ENCODE measurements at regions of chr2 and their contacts with region 1.

Region 1: GRCh38 chr2:233976690-233977294 is 59.6 kb downstream of the TRPM8 start:
- DNase-seq: peak in 1 of 2 donors; percentile 82
- ATAC-seq: peak; percentile 73 to 88 (median 84)
- H3K4me3 ChIP-seq: no peak overlapping the region
- H3K4me3 Mint-ChIP-seq: no peak overlapping the region
- H3K27ac ChIP-seq: no peak overlapping the region
- H3K27ac Mint-ChIP-seq: peak overlapping the region; percentile 36 to 67
- H3K4me1 ChIP-seq: peaks cover 21% of the 10 kb centered on the region
- H3K4me1 Mint-ChIP-seq: peaks cover 26 to 31% of the 10 kb centered on the region in 2 donors
- H3K27me3 ChIP-seq: no peaks in the 10 kb centered on the region
- H3K27me3 Mint-ChIP-seq: peaks cover 0 to 9% of the 10 kb centered on the region in 2 donors
- CTCF ChIP-seq: peak; percentile 73

Region 2: GRCh38 chr2:233387667-233388528 is 588.9 kb before region 1 on chr2:
- intact Hi-C with region 1: no loop called
- DNase-seq: peak in 1 of 2 donors; percentile 48
- ATAC-seq: no peak
- H3K4me3 ChIP-seq: no peak overlapping the region
- H3K4me3 Mint-ChIP-seq: peak overlapping the region; percentile 87
- H3K27ac ChIP-seq: peak overlapping the region; percentile 64
- H3K27ac Mint-ChIP-seq: peak overlapping the region; percentile 91 to 93
- H3K4me1 ChIP-seq: peaks cover 66% of the 10 kb centered on the region
- H3K4me1 Mint-ChIP-seq: peaks cover 67 to 78% of the 10 kb centered on the region in 2 donors
- H3K27me3 ChIP-seq: no peaks in the 10 kb centered on the region
- H3K27me3 Mint-ChIP-seq: no peaks in the 10 kb centered on the region
- CTCF ChIP-seq: no peak

Region 3: DNA sequence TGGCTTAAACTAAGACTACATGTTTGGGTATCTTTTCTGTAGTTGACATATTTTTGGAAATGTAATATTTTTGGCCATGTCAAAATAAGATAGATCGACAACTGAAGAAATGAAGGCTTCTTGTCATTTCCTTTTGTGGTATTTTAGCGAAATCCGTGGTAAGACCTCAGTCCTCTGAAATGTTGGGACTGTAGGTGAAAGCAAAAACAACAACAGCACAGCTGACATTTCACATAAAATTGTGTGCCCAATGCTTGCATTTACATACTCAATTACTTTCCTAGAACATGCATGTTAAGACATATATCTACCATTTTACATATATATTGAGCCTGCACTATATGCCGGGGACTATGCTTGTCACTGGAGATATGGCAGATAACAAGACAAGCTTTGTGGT is 123.9 kb after region 1 on chr2:
- intact Hi-C with region 1: loop called (anchors 2 kb)
- DNase-seq: peak in 1 of 2 donors; percentile 63
- ATAC-seq: peak; percentile 55 to 86 (median 81)
- H3K4me3 ChIP-seq: no peak overlapping the region
- H3K4me3 Mint-ChIP-seq: peak overlapping the region; percentile 61
- H3K27ac ChIP-seq: peak overlapping the region; percentile 76
- H3K27ac Mint-ChIP-seq: peak overlapping the region; percentile 69 to 81
- H3K4me1 ChIP-seq: peaks cover 30% of the 10 kb centered on the region
- H3K4me1 Mint-ChIP-seq: peaks cover 53 to 57% of the 10 kb centered on the region in 2 donors
- H3K27me3 ChIP-seq: no peaks in the 10 kb centered on the region
- H3K27me3 Mint-ChIP-seq: no peaks in the 10 kb centered on the region
- CTCF ChIP-seq: no peak

Region 4: DNA sequence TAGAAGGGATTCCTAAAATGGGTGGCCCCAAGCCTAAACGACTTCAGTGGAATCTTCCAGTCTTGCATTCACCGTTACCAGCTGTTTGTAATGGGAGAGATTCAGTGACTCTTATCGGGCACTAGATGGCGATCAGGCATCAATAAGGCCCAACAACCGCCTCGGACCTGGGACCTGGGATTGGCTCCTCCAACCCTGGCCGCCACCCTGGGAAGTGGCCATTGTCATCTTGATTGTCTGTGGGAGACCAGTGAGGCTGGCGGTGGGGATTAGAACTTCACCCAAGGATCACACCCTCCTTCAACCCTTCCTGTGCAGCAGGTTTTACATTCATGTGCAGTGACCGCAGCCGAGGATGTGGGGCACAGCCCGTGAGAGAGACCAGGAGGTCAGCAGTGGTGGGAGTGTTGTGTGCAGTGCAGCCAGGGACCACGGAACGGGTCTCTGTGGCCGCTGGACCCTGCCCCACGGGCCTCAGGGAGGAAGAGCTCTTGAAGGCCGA is 159.0 kb after region 1 on chr2:
- intact Hi-C with region 1: loop called (anchors 10 kb)
- DNase-seq: peak; percentile 41 to 79
- ATAC-seq: peak; percentile 50 to 74 (median 73)
- H3K4me3 ChIP-seq: no peak overlapping the region
- H3K4me3 Mint-ChIP-seq: peak overlapping the region; percentile 83
- H3K27ac ChIP-seq: peak overlapping the region; percentile 57
- H3K27ac Mint-ChIP-seq: peak overlapping the region; percentile 72 to 88
- H3K4me1 ChIP-seq: peaks cover 50% of the 10 kb centered on the region
- H3K4me1 Mint-ChIP-seq: peaks cover 41 to 43% of the 10 kb centered on the region in 2 donors
- H3K27me3 ChIP-seq: no peaks in the 10 kb centered on the region
- H3K27me3 Mint-ChIP-seq: no peaks in the 10 kb centered on the region
- CTCF ChIP-seq: peak; percentile 76

Region 5: DNA sequence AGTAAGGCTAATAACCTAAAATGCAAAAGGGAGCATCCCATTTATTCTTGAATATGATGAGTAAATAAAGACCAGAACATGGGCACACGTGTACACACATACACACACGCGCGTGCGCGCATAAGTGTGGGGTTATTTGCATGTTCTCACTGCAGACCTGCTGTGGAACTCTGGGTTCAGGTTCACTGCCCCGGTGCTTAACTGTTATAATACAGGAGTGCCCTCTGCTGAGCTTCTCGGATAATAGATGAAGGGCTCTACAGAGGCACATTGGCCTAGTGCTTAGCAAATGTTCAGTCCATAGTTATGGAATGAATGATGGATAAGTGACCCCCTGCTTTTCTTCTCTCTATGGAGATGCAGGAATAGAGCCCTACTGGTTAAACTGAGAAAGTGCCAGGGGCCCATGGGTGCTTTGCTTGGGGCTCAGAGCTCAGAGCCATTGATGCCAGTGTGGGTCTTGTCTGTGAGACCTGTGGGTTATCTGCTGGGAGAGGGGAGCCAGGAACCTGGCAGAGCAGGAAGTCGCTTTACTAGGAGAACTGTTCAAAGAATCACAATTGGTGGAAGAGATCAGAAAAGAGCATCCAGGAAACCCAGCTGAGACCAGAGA is 523.7 kb after region 1 on chr2:
- intact Hi-C with region 1: loop called (anchors 1 kb)
- DNase-seq: peak; percentile 47 to 90
- ATAC-seq: peak; percentile 39 to 62 (median 47)
- H3K4me3 ChIP-seq: no peak overlapping the region
- H3K4me3 Mint-ChIP-seq: peak overlapping the region; percentile 68
- H3K27ac ChIP-seq: no peak overlapping the region
- H3K27ac Mint-ChIP-seq: peak overlapping the region; percentile 91 to 95
- H3K4me1 ChIP-seq: peaks cover 26% of the 10 kb centered on the region
- H3K4me1 Mint-ChIP-seq: peaks cover 38% of the 10 kb centered on the region in 2 donors
- H3K27me3 ChIP-seq: no peaks in the 10 kb centered on the region
- H3K27me3 Mint-ChIP-seq: peaks cover 4 to 23% of the 10 kb centered on the region in 2 donors
- CTCF ChIP-seq: peak; percentile 71

Region 6: GRCh38 chr2:234544659-234545611 is 568.1 kb after region 1 on chr2:
- intact Hi-C with region 1: loop called (anchors 1 kb)
- DNase-seq: peak; percentile 75 to 87
- ATAC-seq: peak; percentile 86 to 97 (median 97)
- H3K4me3 ChIP-seq: no peak overlapping the region
- H3K4me3 Mint-ChIP-seq: no peak overlapping the region
- H3K27ac ChIP-seq: no peak overlapping the region
- H3K27ac Mint-ChIP-seq: no peak overlapping the region
- H3K4me1 ChIP-seq: peaks cover 7% of the 10 kb centered on the region
- H3K4me1 Mint-ChIP-seq: peaks cover 5 to 14% of the 10 kb centered on the region in 2 donors
- H3K27me3 ChIP-seq: no peaks in the 10 kb centered on the region
- H3K27me3 Mint-ChIP-seq: peaks cover 25 to 43% of the 10 kb centered on the region in 2 donors
- CTCF ChIP-seq: peak; percentile 92

Measured in natural killer cell (primary cell).